ENCODE measurements at regions of chr6 and their contacts with region 1.

Region 1: GRCh38 chr6:154928325-154928922 is 66.7 kb upstream of the TIAM2 start:
- DNase-seq: peak; percentile 82
- H3K4me3 ChIP-seq: no peak overlapping the region
- H3K27ac ChIP-seq: no peak overlapping the region
- H3K4me1 ChIP-seq: peaks cover 29% of the 10 kb centered on the region
- H3K27me3 ChIP-seq: no peaks in the 10 kb centered on the region
- CTCF ChIP-seq: peak; percentile 87

Region 2: DNA sequence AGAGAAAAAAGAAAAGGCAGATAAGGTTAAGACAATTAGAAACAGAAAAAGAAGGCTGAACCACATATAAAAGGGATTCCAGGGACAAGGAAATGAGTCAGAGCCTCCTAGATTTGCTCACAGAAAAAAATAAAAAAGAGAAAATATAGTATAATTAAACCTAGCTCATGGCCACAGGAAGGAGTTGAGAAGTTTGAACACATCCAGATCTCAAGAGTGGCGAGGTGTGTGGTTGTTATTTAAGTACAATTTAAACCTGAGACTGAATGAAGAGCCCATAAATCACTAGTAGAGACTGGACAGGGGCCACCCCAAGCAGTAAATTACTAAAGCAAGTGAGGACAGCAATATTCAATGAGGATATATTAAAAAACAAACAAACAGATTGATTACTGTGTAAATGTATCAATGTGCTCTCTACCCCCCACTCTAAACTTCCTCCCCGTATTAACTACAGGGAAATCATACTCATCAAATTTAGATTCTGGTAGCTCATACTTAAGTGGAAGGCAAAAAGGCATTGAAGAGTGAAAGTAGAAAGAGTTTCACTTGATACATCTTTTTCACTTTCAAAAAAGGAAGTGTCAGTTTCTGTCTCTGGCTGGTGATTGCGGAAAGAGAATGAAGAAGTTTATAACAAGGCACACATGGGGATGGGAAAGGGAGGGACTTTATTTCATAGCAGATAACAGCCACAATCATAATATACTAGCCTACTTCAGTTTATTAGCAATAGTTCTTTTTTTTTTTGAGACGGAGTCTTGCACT is 244.5 kb before region 1 on chr6:
- CTCF ChIA-PET with region 1: no interaction called
- POLR2A ChIA-PET with region 1: interaction called, 13 read pairs
- intact Hi-C with region 1: loop called (anchors 5 kb)
- DNase-seq: peak; percentile 58
- H3K4me3 ChIP-seq: no peak overlapping the region
- H3K27ac ChIP-seq: no peak overlapping the region
- H3K4me1 ChIP-seq: peaks cover 9% of the 10 kb centered on the region
- H3K27me3 ChIP-seq: no peaks in the 10 kb centered on the region
- CTCF ChIP-seq: no peak

Region 3: DNA sequence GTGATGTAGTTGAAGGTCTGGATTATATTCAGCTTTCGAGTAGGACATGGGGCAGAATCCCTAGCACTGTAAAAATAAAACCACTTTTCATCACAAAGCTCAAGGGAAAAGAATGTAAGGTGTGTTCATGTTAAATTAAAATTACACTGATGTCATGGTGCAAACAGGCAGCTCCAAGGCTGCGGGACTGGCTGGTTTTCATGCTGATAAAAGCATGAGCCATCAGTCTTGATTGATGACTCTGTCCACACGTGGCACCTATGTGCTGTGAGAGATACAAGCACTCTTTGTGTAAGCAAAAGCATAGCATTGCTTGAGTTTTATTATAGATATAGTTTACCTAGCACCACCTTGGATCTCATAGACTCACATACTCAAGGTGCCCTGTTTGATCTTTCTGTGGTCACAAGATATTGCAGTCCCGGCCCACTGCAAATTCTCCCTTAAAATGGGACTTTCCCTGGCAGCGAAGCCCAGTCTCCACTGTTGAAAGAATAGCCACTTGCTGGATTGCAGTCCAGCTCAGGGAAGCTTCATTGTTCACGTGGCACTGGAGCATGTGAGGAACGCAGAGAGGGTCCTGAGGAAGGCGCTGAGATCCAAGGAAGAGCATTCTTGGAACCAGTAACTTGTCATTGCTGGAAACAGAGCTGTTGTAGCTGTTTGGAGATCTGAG is 157.3 kb after region 1 on chr6:
- CTCF ChIA-PET with region 1: interaction called, 14 read pairs
- POLR2A ChIA-PET with region 1: no interaction called
- intact Hi-C with region 1: no loop called
- DNase-seq: no peak
- H3K4me3 ChIP-seq: no peak overlapping the region
- H3K27ac ChIP-seq: no peak overlapping the region
- H3K4me1 ChIP-seq: no peaks in the 10 kb centered on the region
- H3K27me3 ChIP-seq: no peaks in the 10 kb centered on the region
- CTCF ChIP-seq: no peak

Region 4: DNA sequence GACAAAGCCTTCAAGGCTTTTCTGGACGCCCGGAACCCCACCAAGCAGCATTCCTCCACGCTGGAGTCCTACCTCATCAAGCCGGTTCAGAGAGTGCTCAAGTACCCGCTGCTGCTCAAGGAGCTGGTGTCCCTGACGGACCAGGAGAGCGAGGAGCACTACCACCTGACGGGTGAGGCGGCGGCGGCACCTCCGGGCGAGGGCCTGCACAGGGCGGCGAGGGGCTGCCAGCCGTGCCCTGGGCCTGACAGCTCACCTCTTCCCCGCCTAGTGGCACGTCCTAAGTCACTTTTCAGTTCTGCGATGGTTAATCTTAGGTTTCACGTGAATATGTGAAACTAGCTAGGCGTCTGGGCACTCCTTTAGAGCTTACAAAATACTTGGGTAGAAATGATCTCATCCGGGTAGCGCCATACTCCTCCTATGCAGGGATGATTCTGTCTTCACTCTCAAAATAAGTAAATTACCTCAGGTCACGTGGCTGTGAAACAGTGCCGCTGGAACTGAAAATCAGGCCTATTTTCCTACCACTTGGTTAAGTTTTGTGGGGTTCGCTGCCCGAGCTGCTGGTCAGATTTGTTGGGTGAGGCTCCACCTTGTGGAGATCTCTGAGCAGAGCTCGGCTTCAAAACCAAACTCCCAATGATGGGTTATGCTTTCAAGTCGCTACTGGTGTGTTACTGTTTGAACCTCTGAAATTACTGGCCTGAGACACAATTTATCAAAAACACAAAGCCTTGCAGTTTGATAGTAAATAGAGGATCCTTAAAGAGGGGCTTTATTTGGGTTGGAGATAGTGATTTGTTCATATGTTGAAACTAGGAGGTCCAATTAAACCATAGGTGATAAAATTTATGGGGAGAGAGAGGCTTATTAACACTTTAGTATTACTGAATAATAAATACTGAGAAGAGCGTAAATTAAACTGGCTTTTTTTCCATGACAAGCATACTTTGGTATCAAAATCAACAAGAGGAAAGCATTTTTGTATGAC is 319.9 kb after region 1 on chr6:
- CTCF ChIA-PET with region 1: interaction called, 3 read pairs
- POLR2A ChIA-PET with region 1: no interaction called
- intact Hi-C with region 1: loop called (anchors 5 kb)
- DNase-seq: peak; percentile 61
- H3K4me3 ChIP-seq: no peak overlapping the region
- H3K27ac ChIP-seq: no peak overlapping the region
- H3K4me1 ChIP-seq: no peaks in the 10 kb centered on the region
- H3K27me3 ChIP-seq: no peaks in the 10 kb centered on the region
- CTCF ChIP-seq: peak; percentile 74